GM18951 (cell line): ENCODE measurements at regions of chr14 and their contacts with region 1.

Region 1: DNA sequence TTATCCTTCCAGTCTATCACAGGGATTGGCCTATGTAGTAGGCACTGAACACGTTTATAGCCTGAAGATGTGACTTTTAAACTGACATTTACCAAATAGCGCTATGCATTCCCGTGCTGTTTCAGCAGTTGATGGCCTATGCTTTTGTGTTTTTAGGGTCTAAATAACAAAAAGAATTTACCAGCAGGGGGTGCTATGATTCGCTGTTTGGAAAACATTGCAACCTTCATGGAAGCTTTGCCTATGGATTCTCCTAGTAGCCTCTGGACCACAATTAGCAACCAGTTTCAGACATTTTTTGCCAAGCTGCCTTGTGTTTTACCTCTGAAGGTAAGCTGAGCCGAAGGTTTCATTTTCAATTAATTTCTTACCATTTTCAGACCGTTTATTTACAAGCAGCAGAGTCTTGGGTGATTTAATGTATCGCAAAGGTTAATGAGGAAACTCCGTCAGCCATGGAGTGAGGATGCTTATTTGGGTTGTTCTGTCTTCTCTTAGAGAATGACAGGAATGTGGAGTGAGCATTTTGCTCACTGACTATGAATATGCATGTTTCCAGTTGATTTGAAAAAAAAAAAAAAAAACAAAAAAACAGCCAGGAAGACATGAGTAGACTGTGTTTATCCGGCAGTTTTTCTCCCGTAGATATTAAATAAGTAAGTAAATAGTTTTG is 133.1 kb downstream of the PRIMA1 start:
- POLR2A ChIP-seq: no peak

Region 2: DNA sequence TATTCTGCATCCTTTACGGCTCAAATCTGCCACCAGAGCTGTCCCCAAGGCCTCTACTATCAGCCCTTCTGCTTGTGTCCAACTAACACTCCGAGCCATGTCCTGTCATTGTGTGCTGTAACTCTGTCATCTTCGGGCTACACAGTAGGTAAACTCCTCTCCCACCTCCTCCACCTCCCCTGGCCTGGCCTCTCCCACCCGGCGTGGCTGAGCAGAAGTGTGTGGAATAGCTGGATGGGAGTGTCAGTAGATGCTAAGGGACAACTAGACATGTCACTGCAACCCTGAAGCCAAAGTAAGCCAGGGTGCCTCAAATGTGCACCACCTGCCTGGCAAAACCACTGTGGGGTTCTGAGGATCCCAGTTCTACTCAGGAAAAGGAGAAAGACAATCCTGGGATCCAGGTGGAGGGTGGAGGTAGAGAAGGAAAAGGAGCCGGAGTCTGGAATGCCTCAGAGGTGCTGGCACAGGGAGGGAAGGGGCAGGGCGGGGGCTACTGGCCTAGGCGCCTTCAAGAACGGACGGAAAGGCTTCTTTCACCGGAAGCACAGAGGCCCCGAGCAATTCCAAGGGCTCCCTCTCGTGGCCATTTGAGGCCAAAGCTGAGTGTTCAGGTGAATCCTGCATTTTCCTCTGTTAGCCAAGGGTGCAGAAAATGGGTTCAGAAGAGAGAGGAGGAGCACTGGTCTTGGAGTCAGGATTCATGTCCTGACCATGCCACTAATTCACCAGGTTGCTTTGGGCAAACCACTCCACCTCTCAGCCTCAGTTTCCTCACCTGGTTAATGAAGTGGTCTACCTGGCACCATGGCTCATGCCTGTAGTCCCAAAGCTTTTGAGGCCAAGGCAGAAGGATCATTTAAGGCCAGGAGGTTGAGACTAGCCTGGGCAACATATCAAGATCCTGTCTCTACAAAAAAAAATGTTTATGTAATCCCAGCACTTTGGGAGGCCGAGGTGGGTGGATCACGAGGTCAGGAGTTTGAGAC is 251.4 kb after region 1 on chr14:
- in situ Hi-C with region 1: loop called (anchors 10 kb)
- POLR2A ChIP-seq: no peak

Region 3: GRCh38 chr14:94001501-94002396 is 346.5 kb after region 1 on chr14:
- in situ Hi-C with region 1: loop called (anchors 25 kb)
- POLR2A ChIP-seq: no peak